ENCODE measurements at regions of chr1 and their contacts with region 1.

Region 1: DNA sequence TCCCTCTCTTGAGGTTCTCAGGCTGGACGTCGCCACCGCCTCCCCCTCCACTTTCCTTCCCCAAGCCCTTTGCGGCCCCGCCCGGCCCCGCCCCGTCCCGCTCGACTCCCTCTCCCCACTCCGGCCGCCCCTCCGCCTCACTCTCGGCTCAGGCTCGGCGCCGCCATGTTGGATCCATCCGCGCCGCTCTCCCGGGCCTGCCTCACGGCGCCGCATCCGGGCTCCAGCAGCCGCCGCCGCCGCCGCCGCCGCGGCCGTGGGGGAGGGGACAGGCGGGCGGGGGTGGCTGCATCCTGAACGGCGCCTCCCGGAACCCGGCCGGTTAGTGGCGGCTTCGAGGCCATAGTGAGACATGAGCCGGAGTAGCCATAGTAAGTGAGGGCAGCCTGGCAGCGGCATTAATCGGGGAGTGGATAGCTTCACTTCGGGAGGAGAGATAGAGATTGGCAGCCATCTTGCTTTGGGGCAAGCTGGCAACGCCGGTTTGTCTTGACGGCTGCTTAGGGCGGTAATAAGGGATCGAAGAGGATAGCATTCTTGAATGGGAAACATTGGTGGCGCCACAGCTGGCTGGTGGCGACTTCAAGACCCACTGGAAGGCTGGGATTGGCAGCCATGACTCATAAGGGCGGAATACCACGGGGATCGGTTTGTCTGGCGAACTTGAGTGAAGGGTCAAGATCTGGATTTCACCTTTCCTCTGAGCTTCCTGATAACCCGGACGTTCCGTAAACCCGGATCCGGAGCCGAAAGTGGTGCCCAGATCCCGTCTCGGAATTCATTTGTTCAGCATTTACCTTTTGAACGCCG is at the start of gene DEDD:
- DNase-seq: peak; percentile 95
- ATAC-seq: peak; percentile 97
- H3K4me3 Mint-ChIP-seq: no peak within 1 kb of the TSS
- H3K27ac Mint-ChIP-seq: peak within 1 kb of the TSS; percentile 62
- H3K4me1 Mint-ChIP-seq: peaks cover 44% of the 10 kb centered on the region
- H3K27me3 Mint-ChIP-seq: no peaks in the 10 kb centered on the region
- total RNA-seq, gene DEDD: 33.9 to 44.9 TPM

Region 2: GRCh38 chr1:161045750-161046571 is 86.7 kb before region 1 on chr1 and contains the start of gene USF1:
- CTCF ChIA-PET with region 1: no interaction called
- POLR2A ChIA-PET with region 1: interaction called, 6 read pairs
- intact Hi-C with region 1: loop called in 1 of 2 experiments (anchors 1 kb)
- DNase-seq: peak; percentile 96
- ATAC-seq: peak; percentile 86
- H3K4me3 Mint-ChIP-seq: peak within 1 kb of the TSS; percentile 81
- H3K27ac Mint-ChIP-seq: peak within 1 kb of the TSS; percentile 99
- H3K4me1 Mint-ChIP-seq: peaks cover 32% of the 10 kb centered on the region
- H3K27me3 Mint-ChIP-seq: no peaks in the 10 kb centered on the region
- total RNA-seq, gene USF1: 34.5 to 42.8 TPM

Region 3: GRCh38 chr1:161098210-161099068 is 34.2 kb before region 1 on chr1 and contains the start of gene KLHDC9:
- CTCF ChIA-PET with region 1: interaction called, 4 read pairs
- POLR2A ChIA-PET with region 1: interaction called, 3 read pairs
- intact Hi-C with region 1: loop called (anchors 2 kb)
- DNase-seq: peak; percentile 84
- ATAC-seq: peak; percentile 82
- H3K4me3 Mint-ChIP-seq: peak within 1 kb of the TSS; percentile 71
- H3K27ac Mint-ChIP-seq: peak within 1 kb of the TSS; percentile 73
- H3K4me1 Mint-ChIP-seq: peaks cover 34% of the 10 kb centered on the region
- H3K27me3 Mint-ChIP-seq: no peaks in the 10 kb centered on the region
- total RNA-seq, gene KLHDC9: 0.39 to 0.50 TPM

Region 4: DNA sequence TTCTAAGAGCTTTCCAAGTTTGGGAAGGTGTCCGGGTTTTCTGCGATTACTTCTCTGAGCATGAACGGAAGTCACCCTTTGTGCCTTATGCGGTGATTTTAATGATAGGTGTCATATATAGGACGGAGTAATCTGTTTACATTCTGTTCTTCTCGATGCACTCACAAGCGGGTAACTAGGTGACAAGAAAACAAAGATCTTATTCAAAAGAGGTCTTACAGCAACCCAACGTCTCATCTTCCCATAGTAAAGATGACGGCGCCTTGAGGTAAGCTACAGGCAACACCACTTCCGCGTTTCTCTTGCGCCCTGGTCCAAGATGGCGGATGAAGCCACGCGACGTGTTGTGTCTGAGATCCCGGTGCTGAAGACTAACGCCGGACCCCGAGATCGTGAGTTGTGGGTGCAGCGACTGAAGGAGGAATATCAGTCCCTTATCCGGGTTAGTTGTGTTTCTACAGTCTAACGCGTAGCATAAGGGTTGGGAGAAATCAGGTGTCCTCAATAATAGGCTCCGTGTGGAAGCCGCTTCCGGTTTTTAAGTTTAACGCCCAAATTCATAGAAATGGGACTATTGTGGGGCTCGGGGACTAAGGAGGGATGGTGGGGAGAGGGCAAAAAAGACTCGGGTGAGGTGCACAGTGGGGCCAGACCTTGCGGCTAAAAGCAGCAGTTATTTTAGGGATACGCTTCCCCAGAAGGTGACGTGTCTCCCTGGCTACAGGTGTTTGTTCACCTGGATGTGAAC is 21.2 kb after region 1 on chr1 and contains the start of gene UFC1:
- CTCF ChIA-PET with region 1: interaction called, 14 read pairs
- POLR2A ChIA-PET with region 1: interaction called, 5 read pairs
- intact Hi-C with region 1: loop called (anchors 1 to 2 kb)
- DNase-seq: peak; percentile 89
- ATAC-seq: peak; percentile 98
- H3K4me3 Mint-ChIP-seq: peak within 1 kb of the TSS; percentile 94
- H3K27ac Mint-ChIP-seq: peak within 1 kb of the TSS; percentile 99
- H3K4me1 Mint-ChIP-seq: peaks cover 20% of the 10 kb centered on the region
- H3K27me3 Mint-ChIP-seq: no peaks in the 10 kb centered on the region
- total RNA-seq, gene UFC1: 89.2 to 98.6 TPM

Region 5: GRCh38 chr1:161165742-161166668 is 33.4 kb after region 1 on chr1 and contains the start of gene PPOX:
- CTCF ChIA-PET with region 1: interaction called, 10 read pairs
- POLR2A ChIA-PET with region 1: interaction called, 15 read pairs
- intact Hi-C with region 1: loop called in 1 of 2 experiments (anchors 1 kb)
- DNase-seq: peak; percentile 96
- ATAC-seq: peak; percentile 97
- H3K4me3 Mint-ChIP-seq: peak within 1 kb of the TSS; percentile 87
- H3K27ac Mint-ChIP-seq: peak within 1 kb of the TSS; percentile 90
- H3K4me1 Mint-ChIP-seq: peaks cover 44% of the 10 kb centered on the region
- H3K27me3 Mint-ChIP-seq: no peaks in the 10 kb centered on the region
- total RNA-seq, gene PPOX: 21.5 to 28.8 TPM

Region 6: DNA sequence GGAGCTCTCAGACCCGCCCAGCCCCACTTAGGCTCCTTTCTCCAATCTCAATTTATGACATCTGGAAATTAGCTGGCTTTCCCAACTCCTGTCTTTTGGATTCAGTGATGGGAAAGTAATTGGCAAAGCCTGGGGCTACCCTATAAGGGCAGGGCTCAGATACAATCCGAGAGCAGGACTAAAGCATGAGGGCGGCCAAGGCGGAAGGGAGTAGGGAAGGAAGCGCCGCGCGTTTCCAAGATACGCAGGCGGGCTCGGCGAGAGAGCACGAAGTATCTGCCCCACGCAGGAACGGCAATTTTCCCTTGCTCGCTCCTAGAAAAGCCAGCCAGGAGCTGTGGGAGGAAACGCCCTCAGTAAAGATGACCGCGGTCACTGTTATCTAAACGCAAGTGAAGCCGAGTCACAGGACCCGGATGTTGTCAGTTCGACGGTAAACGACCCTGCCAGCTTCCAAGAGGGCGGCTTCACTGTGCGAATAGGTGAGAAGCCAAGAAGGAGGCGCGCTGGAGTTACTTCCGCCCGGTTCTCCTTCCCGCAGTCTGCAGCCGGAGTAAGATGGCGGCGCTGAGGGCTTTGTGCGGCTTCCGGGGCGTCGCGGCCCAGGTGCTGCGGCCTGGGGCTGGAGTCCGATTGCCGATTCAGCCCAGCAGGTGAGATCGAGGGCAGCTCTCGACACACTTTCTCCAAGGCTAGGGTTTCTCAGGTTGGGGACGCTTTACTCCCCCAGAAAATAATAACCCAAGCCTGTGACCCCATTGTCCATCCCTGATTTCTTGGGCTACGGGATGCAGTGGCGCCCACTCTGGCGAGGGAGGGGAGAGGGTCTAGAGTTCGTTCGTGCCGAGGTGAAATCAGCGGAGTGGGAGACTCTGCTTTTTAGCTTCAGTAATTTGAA is 69.5 kb after region 1 on chr1 and contains the start of gene NDUFS2:
- CTCF ChIA-PET with region 1: no interaction called
- POLR2A ChIA-PET with region 1: no interaction called
- intact Hi-C with region 1: loop called in 1 of 2 experiments (anchors 1 kb)
- DNase-seq: peak; percentile 97
- ATAC-seq: peak; percentile 99
- H3K4me3 Mint-ChIP-seq: peak within 1 kb of the TSS; percentile 92
- H3K27ac Mint-ChIP-seq: peak within 1 kb of the TSS; percentile 95
- H3K4me1 Mint-ChIP-seq: peaks cover 50% of the 10 kb centered on the region
- H3K27me3 Mint-ChIP-seq: no peaks in the 10 kb centered on the region
- total RNA-seq, gene NDUFS2: 71.8 to 92.0 TPM

Measured in activated CD4-positive, alpha-beta T cell treated with anti-CD3 and anti-CD28 coated beads for 36 hours (primary cell).